ENCODE measurements at regions of chr6 and their contacts with region 1.

Region 1: DNA sequence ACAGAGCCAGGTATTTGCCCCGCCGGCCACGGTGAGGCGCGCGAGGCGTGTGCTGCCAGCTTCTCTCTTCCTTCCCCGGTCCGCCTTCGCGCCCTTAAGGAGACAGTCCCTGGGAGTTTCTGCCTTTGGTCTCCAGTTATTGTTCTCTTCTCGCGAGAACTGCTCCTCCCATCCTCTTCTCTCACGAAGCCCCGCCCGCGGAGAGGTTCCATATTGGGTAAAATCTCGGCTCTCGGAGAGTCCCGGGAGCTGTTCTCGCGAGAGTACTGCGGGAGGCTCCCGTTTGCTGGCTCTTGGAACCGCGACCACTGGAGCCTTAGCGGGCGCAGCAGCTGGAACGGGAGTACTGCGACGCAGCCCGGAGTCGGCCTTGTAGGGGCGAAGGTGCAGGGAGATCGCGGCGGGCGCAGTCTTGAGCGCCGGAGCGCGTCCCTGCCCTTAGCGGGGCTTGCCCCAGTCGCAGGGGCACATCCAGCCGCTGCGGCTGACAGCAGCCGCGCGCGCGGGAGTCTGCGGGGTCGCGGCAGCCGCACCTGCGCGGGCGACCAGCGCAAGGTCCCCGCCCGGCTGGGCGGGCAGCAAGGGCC is at the start of gene MAPK14:
- DNase-seq: peak; percentile 96
- ATAC-seq: peak; percentile 87
- H3K4me3 ChIP-seq: peak within 1 kb of the TSS; percentile 87
- H3K27ac ChIP-seq: peak within 1 kb of the TSS; percentile 84
- H3K4me1 ChIP-seq: no peaks in the 10 kb centered on the region; the same call in 1 of the 2 replicates
- H3K27me3 ChIP-seq: no peaks in the 10 kb centered on the region; a peak in 1 of 4 replicates
- CTCF ChIP-seq: peak; percentile 95 to 99 (median 97); a peak in 5 of 6 replicates
- EP300 ChIP-seq: no peak
- POLR2A ChIP-seq: peak; percentile 96
- RAD21 ChIP-seq: peak; percentile 94
- polyA plus RNA-seq, gene MAPK14: 12.5 to 13.7 TPM

Region 2: DNA sequence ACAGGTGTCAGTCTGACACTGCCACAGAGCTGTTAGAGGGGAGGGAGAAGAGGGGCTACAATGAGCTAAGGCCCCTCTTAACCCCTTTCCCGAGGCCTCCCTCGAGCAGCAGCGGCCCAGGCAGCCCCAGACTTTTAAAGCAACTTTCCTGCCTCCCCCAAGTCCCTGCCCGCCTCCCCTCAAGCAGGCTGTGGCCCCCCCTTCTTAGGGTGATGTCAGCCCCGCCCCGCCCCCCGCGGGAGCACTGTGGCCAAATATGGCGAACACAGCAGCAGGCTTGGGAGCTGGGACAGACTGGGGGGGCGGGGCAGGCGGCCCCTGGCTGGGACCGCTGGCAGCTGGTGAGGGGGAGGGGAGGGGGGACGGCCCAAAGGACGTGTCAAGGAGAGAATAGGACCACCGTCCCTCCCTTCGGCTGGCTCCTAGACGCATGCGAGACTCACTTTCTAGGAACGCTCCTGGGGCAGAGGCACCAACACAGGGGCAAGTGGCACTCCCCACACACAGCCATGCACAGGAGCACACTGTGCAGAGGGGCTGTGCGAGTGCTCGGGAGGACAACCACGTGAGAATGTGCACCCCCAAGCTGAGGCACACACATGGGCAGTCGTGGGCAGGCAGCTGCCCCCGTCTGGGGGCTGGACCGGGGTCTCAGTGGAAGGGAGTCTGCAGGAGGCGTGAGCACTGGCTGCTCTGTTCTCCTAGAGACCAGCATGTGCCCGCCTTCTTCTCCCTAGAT is 537.4 kb before region 1 on chr6:
- CTCF ChIA-PET with region 1: no interaction called
- POLR2A ChIA-PET with region 1: no interaction called
- RAD21 ChIA-PET with region 1: no interaction called
- SMC1A ChIA-PET with region 1: no interaction called
- in situ Hi-C with region 1: no loop called
- intact Hi-C with region 1: no loop called
- DNase-seq: no peak
- ATAC-seq: no peak
- H3K4me3 ChIP-seq: no peak overlapping the region
- H3K27ac ChIP-seq: no peak overlapping the region
- H3K4me1 ChIP-seq: peaks cover 8% of the 10 kb centered on the region
- H3K27me3 ChIP-seq: no peaks in the 10 kb centered on the region; a peak in 3 of 4 replicates
- CTCF ChIP-seq: no peak
- EP300 ChIP-seq: no peak
- POLR2A ChIP-seq: no peak
- RAD21 ChIP-seq: no peak

Region 3: GRCh38 chr6:36052097-36052496 is 24.5 kb after region 1 on chr6:
- CTCF ChIA-PET with region 1: interaction called, 9 read pairs
- POLR2A ChIA-PET with region 1: interaction called, 4 read pairs
- RAD21 ChIA-PET with region 1: interaction called, 11 read pairs
- SMC1A ChIA-PET with region 1: interaction called, 9 read pairs
- in situ Hi-C with region 1: no loop called
- intact Hi-C with region 1: no loop called
- DNase-seq: no peak
- ATAC-seq: no peak
- H3K4me3 ChIP-seq: no peak overlapping the region
- H3K27ac ChIP-seq: no peak overlapping the region
- H3K4me1 ChIP-seq: peaks cover 3% of the 10 kb centered on the region; the same call in 1 of the 2 replicates
- H3K27me3 ChIP-seq: no peaks in the 10 kb centered on the region
- CTCF ChIP-seq: no peak
- EP300 ChIP-seq: no peak
- POLR2A ChIP-seq: no peak
- RAD21 ChIP-seq: no peak

Region 4: DNA sequence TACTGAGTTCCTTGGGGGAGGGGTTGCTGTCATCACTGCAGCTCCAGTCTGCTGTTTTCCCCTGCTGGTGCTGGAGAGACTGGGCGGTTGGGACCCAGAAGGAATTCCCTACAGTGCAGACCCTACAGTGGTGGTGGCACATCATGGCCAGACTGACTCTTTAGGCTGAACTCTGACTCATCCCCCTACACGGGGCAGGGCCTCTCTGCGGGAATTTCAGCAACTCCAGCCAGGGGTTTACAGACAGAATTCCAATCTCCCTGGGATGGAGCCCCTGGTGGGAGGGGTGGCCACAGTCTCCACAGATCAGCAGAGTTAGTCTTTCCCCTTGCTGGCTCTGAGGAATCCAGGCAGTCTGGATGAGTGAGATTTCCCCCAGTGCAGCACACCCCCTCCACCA is 55.9 kb after region 1 on chr6:
- CTCF ChIA-PET with region 1: interaction called, 17 read pairs
- POLR2A ChIA-PET with region 1: interaction called, 3 read pairs
- RAD21 ChIA-PET with region 1: interaction called, 7 read pairs
- SMC1A ChIA-PET with region 1: interaction called, 26 read pairs
- in situ Hi-C with region 1: no loop called
- intact Hi-C with region 1: no loop called
- DNase-seq: no peak
- ATAC-seq: no peak
- H3K4me3 ChIP-seq: no peak overlapping the region
- H3K27ac ChIP-seq: no peak overlapping the region
- H3K4me1 ChIP-seq: no peaks in the 10 kb centered on the region
- H3K27me3 ChIP-seq: no peaks in the 10 kb centered on the region
- CTCF ChIP-seq: no peak
- EP300 ChIP-seq: no peak
- POLR2A ChIP-seq: no peak
- RAD21 ChIP-seq: no peak

Region 5: GRCh38 chr6:36123257-36124139 is 95.9 kb after region 1 on chr6:
- CTCF ChIA-PET with region 1: interaction called, 28 read pairs
- POLR2A ChIA-PET with region 1: interaction called, 9 read pairs
- RAD21 ChIA-PET with region 1: interaction called, 27 read pairs
- SMC1A ChIA-PET with region 1: interaction called, 44 read pairs
- in situ Hi-C with region 1: no loop called
- intact Hi-C with region 1: no loop called
- DNase-seq: no peak
- ATAC-seq: peak; percentile 92
- H3K4me3 ChIP-seq: no peak overlapping the region
- H3K27ac ChIP-seq: no peak overlapping the region
- H3K4me1 ChIP-seq: peaks cover 26% of the 10 kb centered on the region
- H3K27me3 ChIP-seq: no peaks in the 10 kb centered on the region
- CTCF ChIP-seq: peak; percentile 75 to 93 (median 91)
- EP300 ChIP-seq: 0 out of 4 replicates have a peak, but pooled peaks of 1 of the 2 experiments have one; percentile 26
- POLR2A ChIP-seq: no peak
- RAD21 ChIP-seq: peak; percentile 92

Region 6: GRCh38 chr6:36139429-36139828 is 111.8 kb after region 1 on chr6:
- CTCF ChIA-PET with region 1: no interaction called
- POLR2A ChIA-PET with region 1: no interaction called
- RAD21 ChIA-PET with region 1: no interaction called
- SMC1A ChIA-PET with region 1: no interaction called
- in situ Hi-C with region 1: no loop called
- intact Hi-C with region 1: no loop called
- DNase-seq: no peak
- ATAC-seq: no peak
- H3K4me3 ChIP-seq: no peak overlapping the region
- H3K27ac ChIP-seq: no peak overlapping the region
- H3K4me1 ChIP-seq: peaks cover 6% of the 10 kb centered on the region; the same call in 1 of the 2 replicates
- H3K27me3 ChIP-seq: no peaks in the 10 kb centered on the region
- CTCF ChIP-seq: peak; percentile 16 to 21 (median 18); a peak in 3 of 6 replicates
- EP300 ChIP-seq: no peak
- POLR2A ChIP-seq: no peak
- RAD21 ChIP-seq: peak; percentile 44; the same call in 1 of the 2 replicates

Region 7: DNA sequence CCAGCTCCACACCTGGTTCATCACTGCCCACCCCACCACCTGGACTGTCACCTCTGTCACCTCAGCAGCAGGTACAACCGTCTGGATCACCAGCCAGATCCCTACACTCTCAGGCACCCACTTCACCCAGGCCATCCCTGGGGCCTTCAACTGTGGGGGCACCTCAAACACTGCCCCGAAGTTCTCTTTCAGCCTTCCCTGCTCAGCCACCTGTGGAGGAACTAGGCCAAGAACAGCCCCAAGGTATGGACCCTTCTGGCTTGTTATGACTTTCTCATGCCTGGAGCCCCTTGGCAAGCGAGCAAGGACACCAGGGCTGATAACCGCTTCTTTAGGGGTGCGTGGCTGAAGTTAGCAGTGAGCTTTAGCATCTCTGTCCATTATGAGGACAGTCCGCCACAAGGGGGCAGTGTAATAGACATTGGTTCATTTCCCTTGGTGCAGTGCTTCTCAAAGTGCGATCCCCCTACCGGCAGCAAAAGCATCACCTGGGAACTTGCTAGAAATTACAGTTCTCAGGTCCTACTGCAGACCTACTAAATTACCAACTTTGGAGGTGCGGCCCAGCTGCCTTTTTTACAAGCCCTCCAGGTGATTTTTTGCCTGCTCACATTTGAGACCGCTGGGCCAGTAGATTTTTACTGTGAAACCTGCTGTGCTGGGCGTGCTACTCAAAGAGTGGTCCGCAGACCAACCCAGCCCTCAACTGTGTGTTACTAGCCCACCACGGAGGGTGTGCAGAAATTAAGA is 274.8 kb after region 1 on chr6:
- CTCF ChIA-PET with region 1: no interaction called
- POLR2A ChIA-PET with region 1: interaction called, 3 read pairs
- RAD21 ChIA-PET with region 1: interaction called, 7 read pairs
- SMC1A ChIA-PET with region 1: interaction called, 4 read pairs
- in situ Hi-C with region 1: no loop called
- intact Hi-C with region 1: loop called (anchors 5 kb)
- DNase-seq: peak; percentile 77
- ATAC-seq: peak; percentile 99
- H3K4me3 ChIP-seq: no peak overlapping the region
- H3K27ac ChIP-seq: no peak overlapping the region
- H3K4me1 ChIP-seq: no peaks in the 10 kb centered on the region
- H3K27me3 ChIP-seq: no peaks in the 10 kb centered on the region
- CTCF ChIP-seq: peak; percentile 88 to 98 (median 98)
- EP300 ChIP-seq: no peak
- POLR2A ChIP-seq: no peak
- RAD21 ChIP-seq: peak; percentile 75